ENCODE measurements at regions of chr18 and their contacts with region 1.

Region 1: DNA sequence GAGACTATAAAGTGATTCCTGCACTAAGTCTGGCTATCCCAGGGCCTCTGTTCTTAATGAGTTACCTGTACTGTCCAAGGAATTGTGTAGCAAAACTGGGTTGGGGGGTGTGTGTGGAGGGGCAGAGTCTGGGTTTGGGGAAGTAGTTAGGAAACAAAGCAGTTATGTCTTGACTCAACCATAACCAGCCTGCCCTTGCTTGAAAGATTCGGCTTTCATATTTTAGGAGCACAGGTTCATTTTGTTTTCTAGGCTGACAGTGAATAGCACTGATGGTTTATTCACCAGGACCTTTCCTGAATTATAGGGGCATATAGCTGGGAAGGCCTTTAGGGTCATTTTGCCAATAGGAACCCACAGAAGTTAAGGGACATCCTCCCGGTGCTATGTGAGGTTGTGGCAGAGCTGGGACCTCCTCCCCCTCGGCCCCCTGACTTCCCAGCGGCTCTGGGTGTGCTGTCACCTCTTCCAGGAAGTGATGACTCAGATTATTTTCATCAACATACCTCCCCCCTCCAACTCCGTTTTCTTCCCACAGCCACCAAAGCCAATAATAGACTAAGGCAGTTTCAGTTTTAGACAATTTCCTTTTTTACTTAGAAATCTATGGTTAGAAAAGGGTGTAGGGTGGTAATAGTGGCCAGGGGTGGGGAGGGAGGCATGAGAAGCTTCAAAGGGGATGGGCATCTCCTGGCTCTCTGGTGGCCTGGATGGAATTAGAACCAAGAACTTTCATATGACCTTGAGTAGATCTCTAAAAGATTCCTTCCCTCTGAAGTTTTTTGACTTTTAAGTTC is 44.8 kb downstream of the SETBP1 start:
- DNase-seq: peak; percentile 62 to 77
- ATAC-seq: peak; percentile 73 to 78 (median 74)
- H3K4me3 ChIP-seq: no peak overlapping the region
- H3K4me3 Mint-ChIP-seq: peak overlapping the region; percentile 74
- H3K27ac ChIP-seq: peak overlapping the region; percentile 61
- H3K27ac Mint-ChIP-seq: peak overlapping the region; percentile 70 to 94
- H3K4me1 ChIP-seq: peaks cover 58% of the 10 kb centered on the region
- H3K4me1 Mint-ChIP-seq: peaks cover 83 to 97% of the 10 kb centered on the region in 2 donors
- H3K27me3 ChIP-seq: no peaks in the 10 kb centered on the region
- H3K27me3 Mint-ChIP-seq: no peaks in the 10 kb centered on the region
- CTCF ChIP-seq: no peak

Region 2: DNA sequence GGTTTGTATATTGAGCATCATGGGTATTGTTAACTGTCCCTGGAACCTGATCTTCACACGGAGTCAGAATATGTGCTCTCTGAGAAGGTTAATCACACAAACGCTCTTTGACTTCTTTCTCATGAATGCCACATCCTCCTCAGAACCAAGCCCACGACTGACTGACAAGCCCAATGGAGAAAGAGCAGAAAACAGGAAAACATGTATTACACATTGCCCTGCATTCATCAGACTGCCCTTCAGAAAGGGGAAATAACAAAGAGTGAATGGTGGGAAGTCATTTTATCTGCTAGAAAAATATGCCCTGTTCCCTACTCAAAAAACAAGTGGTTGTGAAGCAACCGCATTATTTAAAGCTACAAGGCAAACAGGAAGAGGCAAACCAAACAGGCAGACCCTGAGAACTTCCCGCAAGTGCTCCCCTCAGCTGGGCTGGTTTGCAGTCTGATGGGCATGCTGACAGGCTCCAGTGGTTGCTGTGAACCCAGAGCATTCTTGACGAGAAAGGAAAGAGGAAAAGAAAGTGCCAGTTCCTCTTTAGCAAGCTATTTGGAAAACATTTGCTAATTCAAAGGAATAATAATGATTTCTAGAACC is 217.7 kb before region 1 on chr18:
- intact Hi-C with region 1: loop called (anchors 5 kb)
- DNase-seq: peak; percentile 23 to 44
- ATAC-seq: peak; percentile 71 to 79 (median 73)
- H3K4me3 ChIP-seq: no peak overlapping the region
- H3K4me3 Mint-ChIP-seq: no peak overlapping the region
- H3K27ac ChIP-seq: peak overlapping the region; percentile 41
- H3K27ac Mint-ChIP-seq: no peak overlapping the region
- H3K4me1 ChIP-seq: peaks cover 13% of the 10 kb centered on the region
- H3K4me1 Mint-ChIP-seq: peaks cover 2 to 12% of the 10 kb centered on the region in 2 donors
- H3K27me3 ChIP-seq: no peaks in the 10 kb centered on the region
- H3K27me3 Mint-ChIP-seq: no peaks in the 10 kb centered on the region
- CTCF ChIP-seq: no peak

Region 3: GRCh38 chr18:44679056-44679905 is 46.2 kb before region 1 on chr18:
- intact Hi-C with region 1: loop called (anchors 2 kb)
- DNase-seq: peak; percentile 73 to 83
- ATAC-seq: peak; percentile 85 to 94 (median 90)
- H3K4me3 ChIP-seq: peak overlapping the region; percentile 76
- H3K4me3 Mint-ChIP-seq: no peak overlapping the region
- H3K27ac ChIP-seq: peak overlapping the region; percentile 87
- H3K27ac Mint-ChIP-seq: peak overlapping the region in 1 of 2 donors; percentile 39
- H3K4me1 ChIP-seq: peaks cover 19% of the 10 kb centered on the region
- H3K4me1 Mint-ChIP-seq: peaks cover 7 to 8% of the 10 kb centered on the region in 2 donors
- H3K27me3 ChIP-seq: no peaks in the 10 kb centered on the region
- H3K27me3 Mint-ChIP-seq: no peaks in the 10 kb centered on the region
- CTCF ChIP-seq: peak; percentile 66

Region 4: GRCh38 chr18:44700652-44701051 is 24.8 kb before region 1 on chr18:
- intact Hi-C with region 1: loop called (anchors 1 kb)
- DNase-seq: peak; percentile 47 to 68
- ATAC-seq: peak; percentile 97 to 99 (median 97)
- H3K4me3 ChIP-seq: no peak overlapping the region
- H3K4me3 Mint-ChIP-seq: peak overlapping the region; percentile 54
- H3K27ac ChIP-seq: peak overlapping the region; percentile 73
- H3K27ac Mint-ChIP-seq: peak overlapping the region; percentile 86 to 90
- H3K4me1 ChIP-seq: peaks cover 15% of the 10 kb centered on the region
- H3K4me1 Mint-ChIP-seq: peaks cover 32 to 33% of the 10 kb centered on the region in 2 donors
- H3K27me3 ChIP-seq: no peaks in the 10 kb centered on the region
- H3K27me3 Mint-ChIP-seq: no peaks in the 10 kb centered on the region
- CTCF ChIP-seq: no peak

Region 5: DNA sequence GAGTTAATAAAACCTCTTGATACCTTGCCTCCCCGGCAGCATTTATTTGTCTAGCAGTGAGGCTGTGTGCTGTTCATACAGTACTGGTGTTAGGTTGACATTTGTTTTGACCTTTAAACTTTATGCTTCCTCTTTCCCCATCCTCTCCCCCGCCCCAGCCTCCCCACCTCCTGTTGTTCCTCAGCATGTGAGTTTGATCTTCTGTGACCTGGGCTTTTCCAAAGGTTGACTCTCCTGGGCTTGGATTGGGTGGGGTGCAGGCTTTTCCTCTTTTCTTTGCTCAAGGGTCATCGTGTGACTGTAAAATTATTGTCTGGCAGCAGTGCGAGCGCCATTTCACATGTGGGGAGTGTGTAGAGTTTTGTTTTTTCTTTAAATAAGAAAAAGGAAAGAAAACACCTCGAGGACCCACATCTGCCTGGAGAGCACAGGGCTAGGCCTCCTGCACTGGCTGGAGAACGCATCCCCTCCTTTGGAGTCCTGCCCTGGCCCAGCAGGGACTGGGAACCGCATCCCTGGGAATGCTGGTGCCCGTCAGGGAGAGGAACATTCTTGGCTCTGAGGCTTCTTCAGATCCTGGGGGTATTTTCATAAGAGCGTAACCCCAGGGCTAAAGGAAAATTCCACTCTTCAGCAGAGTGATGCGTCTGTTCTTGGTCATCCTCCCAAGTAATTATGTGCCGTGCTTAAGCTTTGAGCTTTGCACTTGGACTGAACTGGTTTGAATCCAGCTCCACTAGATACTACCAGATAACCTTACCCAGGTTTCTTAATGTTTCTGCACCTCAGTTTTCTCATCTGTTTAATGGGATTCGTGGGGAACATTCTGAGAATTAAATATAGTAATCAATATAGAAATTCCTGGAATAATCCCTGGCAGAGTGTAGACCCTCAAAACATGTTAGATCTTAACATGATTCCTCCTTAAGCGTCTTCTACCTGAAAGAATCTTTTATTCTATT is 46.7 kb after region 1 on chr18:
- intact Hi-C with region 1: no loop called
- DNase-seq: no peak
- ATAC-seq: no peak
- H3K4me3 ChIP-seq: no peak overlapping the region
- H3K4me3 Mint-ChIP-seq: no peak overlapping the region
- H3K27ac ChIP-seq: no peak overlapping the region
- H3K27ac Mint-ChIP-seq: no peak overlapping the region
- H3K4me1 ChIP-seq: peaks cover 3% of the 10 kb centered on the region
- H3K4me1 Mint-ChIP-seq: peaks cover 44 to 47% of the 10 kb centered on the region in 2 donors
- H3K27me3 ChIP-seq: no peaks in the 10 kb centered on the region
- H3K27me3 Mint-ChIP-seq: no peaks in the 10 kb centered on the region
- CTCF ChIP-seq: no peak

Region 6: DNA sequence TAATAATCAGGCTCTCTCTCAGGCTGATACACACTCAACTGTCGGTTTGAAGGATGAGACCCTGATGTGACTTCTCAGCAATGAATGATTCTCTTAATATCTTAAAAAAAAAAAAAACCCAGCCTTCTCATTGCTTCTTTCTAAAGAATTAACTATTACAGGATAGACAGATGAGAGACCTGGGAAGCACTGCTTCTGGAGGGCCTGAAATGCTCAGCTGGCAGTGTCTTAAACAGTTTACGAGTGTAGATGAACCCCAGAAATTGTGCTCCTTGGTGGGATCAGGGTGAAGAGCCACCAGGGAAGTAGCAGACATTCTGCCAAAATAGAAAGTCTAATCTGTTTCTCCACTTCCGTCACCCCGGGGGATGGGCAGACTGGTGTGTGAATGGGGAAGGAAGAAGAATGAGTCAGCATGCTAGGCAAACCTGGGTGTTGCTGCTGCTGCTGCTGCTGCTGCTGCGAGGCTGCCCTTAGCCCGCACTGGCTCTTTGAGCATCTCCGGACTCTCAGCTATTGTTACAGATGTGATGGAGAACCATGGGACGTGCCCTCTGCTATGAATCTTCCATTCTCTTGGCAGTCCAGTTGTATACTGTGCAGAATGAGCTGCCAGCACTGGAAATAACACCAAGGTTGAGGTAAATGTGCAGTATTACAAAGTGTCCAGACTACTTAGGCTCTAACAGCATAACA is 113.6 kb after region 1 on chr18:
- intact Hi-C with region 1: loop called (anchors 5 kb)
- DNase-seq: peak; percentile 70 to 73
- ATAC-seq: peak; percentile 94 to 97 (median 94)
- H3K4me3 ChIP-seq: no peak overlapping the region
- H3K4me3 Mint-ChIP-seq: peak overlapping the region; percentile 67
- H3K27ac ChIP-seq: peak overlapping the region; percentile 69
- H3K27ac Mint-ChIP-seq: peak overlapping the region; percentile 57 to 76
- H3K4me1 ChIP-seq: peaks cover 33% of the 10 kb centered on the region
- H3K4me1 Mint-ChIP-seq: peaks cover 68 to 75% of the 10 kb centered on the region in 2 donors
- H3K27me3 ChIP-seq: no peaks in the 10 kb centered on the region
- H3K27me3 Mint-ChIP-seq: peaks cover 0 to 2% of the 10 kb centered on the region in 2 donors
- CTCF ChIP-seq: no peak

Region 7: GRCh38 chr18:44887227-44887631 is 161.7 kb after region 1 on chr18:
- intact Hi-C with region 1: loop called (anchors 1 kb)
- DNase-seq: peak; percentile 22 to 50
- ATAC-seq: peak; percentile 93 to 96 (median 93)
- H3K4me3 ChIP-seq: no peak overlapping the region
- H3K4me3 Mint-ChIP-seq: peak overlapping the region; percentile 18
- H3K27ac ChIP-seq: peak overlapping the region; percentile 1
- H3K27ac Mint-ChIP-seq: peak overlapping the region; percentile 85 to 96
- H3K4me1 ChIP-seq: peaks cover 8% of the 10 kb centered on the region
- H3K4me1 Mint-ChIP-seq: peaks cover 25 to 30% of the 10 kb centered on the region in 2 donors
- H3K27me3 ChIP-seq: no peaks in the 10 kb centered on the region
- H3K27me3 Mint-ChIP-seq: no peaks in the 10 kb centered on the region
- CTCF ChIP-seq: no peak

Region 8: GRCh38 chr18:45106331-45106774 is 380.9 kb after region 1 on chr18:
- intact Hi-C with region 1: loop called (anchors 1 kb)
- DNase-seq: peak; percentile 48 to 59
- ATAC-seq: peak; percentile 84 to 94 (median 92)
- H3K4me3 ChIP-seq: no peak overlapping the region
- H3K4me3 Mint-ChIP-seq: no peak overlapping the region
- H3K27ac ChIP-seq: peak overlapping the region; percentile 42
- H3K27ac Mint-ChIP-seq: no peak overlapping the region
- H3K4me1 ChIP-seq: peaks cover 35% of the 10 kb centered on the region
- H3K4me1 Mint-ChIP-seq: peaks cover 35 to 49% of the 10 kb centered on the region in 2 donors
- H3K27me3 ChIP-seq: no peaks in the 10 kb centered on the region
- H3K27me3 Mint-ChIP-seq: peaks cover 14 to 34% of the 10 kb centered on the region in 2 donors
- CTCF ChIP-seq: no peak

Region 9: GRCh38 chr18:46054956-46055837 is 1329.7 kb after region 1 on chr18:
- intact Hi-C with region 1: no loop called
- DNase-seq: peak; percentile 23 to 48
- ATAC-seq: peak; percentile 86 to 94 (median 92)
- H3K4me3 ChIP-seq: no peak overlapping the region
- H3K4me3 Mint-ChIP-seq: peak overlapping the region; percentile 83
- H3K27ac ChIP-seq: peak overlapping the region; percentile 88
- H3K27ac Mint-ChIP-seq: peak overlapping the region; percentile 89 to 97
- H3K4me1 ChIP-seq: peaks cover 22% of the 10 kb centered on the region
- H3K4me1 Mint-ChIP-seq: peaks cover 49 to 51% of the 10 kb centered on the region in 2 donors
- H3K27me3 ChIP-seq: no peaks in the 10 kb centered on the region
- H3K27me3 Mint-ChIP-seq: no peaks in the 10 kb centered on the region
- CTCF ChIP-seq: no peak

Measured in natural killer cell (primary cell).